Mammary epithelial cell (primary cell): ENCODE measurements at regions of chr1 and their contacts with region 1.

Region 1: GRCh38 chr1:221435504-221435904 is 306.4 kb downstream of the DUSP10 start:
- DNase-seq: peak; percentile 37
- H3K4me3 ChIP-seq: no peak overlapping the region
- H3K27ac ChIP-seq: no peak overlapping the region
- H3K4me1 ChIP-seq: peaks cover 19% of the 10 kb centered on the region
- H3K27me3 ChIP-seq: no peaks in the 10 kb centered on the region
- CTCF ChIP-seq: peak; percentile 87 to 96

Region 2: GRCh38 chr1:220873868-220874655 is 561.4 kb before region 1 on chr1:
- CTCF ChIA-PET with region 1: no interaction called
- dilution Hi-C with region 1: no loop called
- in situ Hi-C with region 1: loop called in 1 of 2 experiments (anchors 25 kb)
- intact Hi-C with region 1: loop called (anchors 1 kb)
- DNase-seq: no peak
- H3K4me3 ChIP-seq: no peak overlapping the region
- H3K27ac ChIP-seq: no peak overlapping the region
- H3K4me1 ChIP-seq: peaks cover 5% of the 10 kb centered on the region
- H3K27me3 ChIP-seq: peaks cover 19% of the 10 kb centered on the region
- CTCF ChIP-seq: peak; percentile 67 to 71

Region 3: GRCh38 chr1:220879076-220879508 is 556.4 kb before region 1 on chr1 and contains the start of gene HLX:
- CTCF ChIA-PET with region 1: no interaction called
- dilution Hi-C with region 1: no loop called
- in situ Hi-C with region 1: loop called in 1 of 2 experiments (anchors 25 kb)
- intact Hi-C with region 1: loop called (anchors 1 kb)
- DNase-seq: peak; percentile 60
- H3K4me3 ChIP-seq: peak within 1 kb of the TSS; percentile 55 to 72 (median 58)
- H3K27ac ChIP-seq: no peak within 1 kb of the TSS
- H3K4me1 ChIP-seq: peaks cover 12% of the 10 kb centered on the region
- H3K27me3 ChIP-seq: peaks cover 45% of the 10 kb centered on the region
- CTCF ChIP-seq: no peak
- total RNA-seq, gene HLX: 0.33 to 0.61 TPM

Region 4: DNA sequence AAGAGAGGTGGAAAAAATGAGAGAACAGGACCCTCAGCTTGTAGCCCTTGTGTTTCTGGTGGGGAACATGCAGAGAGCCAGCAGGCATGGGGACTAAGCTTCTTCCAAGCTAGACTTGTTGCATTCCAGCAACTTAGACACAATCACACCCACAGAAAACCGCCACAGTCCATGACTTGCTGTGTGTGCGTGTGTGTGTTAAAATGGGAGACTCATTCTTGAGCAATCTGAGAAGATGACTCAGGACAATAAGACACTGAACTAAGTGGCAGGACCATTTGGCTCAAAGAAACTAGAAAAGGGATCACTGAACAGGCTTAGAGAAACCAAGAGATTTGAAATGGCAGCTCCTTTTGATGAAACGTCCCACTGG is 478.3 kb before region 1 on chr1:
- CTCF ChIA-PET with region 1: no interaction called
- dilution Hi-C with region 1: no loop called
- in situ Hi-C with region 1: no loop called
- intact Hi-C with region 1: loop called (anchors 10 kb)
- DNase-seq: peak; percentile 88
- H3K4me3 ChIP-seq: no peak overlapping the region
- H3K27ac ChIP-seq: no peak overlapping the region
- H3K4me1 ChIP-seq: peaks cover 12% of the 10 kb centered on the region
- H3K27me3 ChIP-seq: no peaks in the 10 kb centered on the region
- CTCF ChIP-seq: no peak

Region 5: GRCh38 chr1:221263831-221264767 is 171.4 kb before region 1 on chr1:
- CTCF ChIA-PET with region 1: interaction called, 42 read pairs
- dilution Hi-C with region 1: loop called (anchors 5 kb)
- in situ Hi-C with region 1: loop called (anchors 10 kb)
- intact Hi-C with region 1: loop called (anchors 1 kb)
- DNase-seq: peak; percentile 61
- H3K4me3 ChIP-seq: no peak overlapping the region
- H3K27ac ChIP-seq: no peak overlapping the region
- H3K4me1 ChIP-seq: no peaks in the 10 kb centered on the region
- H3K27me3 ChIP-seq: peaks cover 2% of the 10 kb centered on the region
- CTCF ChIP-seq: peak; percentile 66 to 75